Caco-2 (cell line): ENCODE measurements at regions of chr3 and their contacts with region 1.

Region 1: DNA sequence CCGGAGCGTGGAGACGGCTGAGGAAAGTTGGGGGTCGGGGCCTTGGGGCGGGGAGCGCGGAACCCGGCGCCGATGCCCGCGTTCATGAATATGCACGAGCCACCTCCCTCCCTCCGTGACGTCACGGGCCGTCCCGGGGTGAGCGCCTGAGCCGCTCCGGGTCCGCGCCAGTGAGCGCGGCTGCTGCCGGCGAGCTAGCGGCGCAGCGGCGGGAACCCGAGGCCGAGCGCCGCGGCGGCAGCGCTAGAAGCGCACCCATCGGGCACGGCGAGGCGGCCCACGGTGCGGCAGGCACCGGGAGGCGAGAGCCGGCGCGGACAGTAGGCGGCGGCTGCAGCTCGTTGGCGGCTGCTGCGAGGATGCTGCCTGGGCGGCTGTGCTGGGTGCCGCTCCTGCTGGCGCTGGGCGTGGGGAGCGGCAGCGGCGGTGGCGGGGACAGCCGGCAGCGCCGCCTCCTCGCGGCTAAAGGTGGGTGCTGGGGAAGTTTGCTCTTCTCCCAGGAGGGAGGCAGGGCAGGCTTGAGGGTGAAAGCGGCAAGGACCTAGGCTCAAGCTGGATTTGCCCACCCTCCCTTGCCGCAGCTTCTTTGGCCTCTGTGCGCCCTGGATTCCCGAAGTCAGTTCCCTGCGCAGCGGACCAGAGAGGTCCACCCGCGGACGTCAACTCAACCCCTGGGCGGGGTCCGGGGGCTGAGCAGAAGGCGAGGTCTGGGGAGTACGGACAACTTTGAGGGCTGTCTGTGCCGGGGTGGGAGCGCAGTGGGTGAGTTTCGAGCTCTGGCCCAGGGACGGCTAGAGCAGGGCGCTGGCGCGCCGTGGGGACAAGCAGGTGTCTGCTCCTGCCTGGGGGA is at the start of gene CLSTN2:
- DNase-seq: peak; percentile 64 to 81
- H3K4me3 ChIP-seq: peak within 1 kb of the TSS; percentile 55
- H3K4me3 Mint-ChIP-seq: peak within 1 kb of the TSS; percentile 86
- H3K27ac Mint-ChIP-seq: peak within 1 kb of the TSS; percentile 21
- H3K4me1 ChIP-seq: no peaks in the 10 kb centered on the region
- H3K4me1 Mint-ChIP-seq: peaks cover 8% of the 10 kb centered on the region
- H3K27me3 ChIP-seq: no peaks in the 10 kb centered on the region
- H3K27me3 Mint-ChIP-seq: peaks cover 9% of the 10 kb centered on the region
- CTCF ChIP-seq: no peak
- total RNA-seq, gene CLSTN2: 20.1 and 26.1 TPM in 2 replicates

Region 2: DNA sequence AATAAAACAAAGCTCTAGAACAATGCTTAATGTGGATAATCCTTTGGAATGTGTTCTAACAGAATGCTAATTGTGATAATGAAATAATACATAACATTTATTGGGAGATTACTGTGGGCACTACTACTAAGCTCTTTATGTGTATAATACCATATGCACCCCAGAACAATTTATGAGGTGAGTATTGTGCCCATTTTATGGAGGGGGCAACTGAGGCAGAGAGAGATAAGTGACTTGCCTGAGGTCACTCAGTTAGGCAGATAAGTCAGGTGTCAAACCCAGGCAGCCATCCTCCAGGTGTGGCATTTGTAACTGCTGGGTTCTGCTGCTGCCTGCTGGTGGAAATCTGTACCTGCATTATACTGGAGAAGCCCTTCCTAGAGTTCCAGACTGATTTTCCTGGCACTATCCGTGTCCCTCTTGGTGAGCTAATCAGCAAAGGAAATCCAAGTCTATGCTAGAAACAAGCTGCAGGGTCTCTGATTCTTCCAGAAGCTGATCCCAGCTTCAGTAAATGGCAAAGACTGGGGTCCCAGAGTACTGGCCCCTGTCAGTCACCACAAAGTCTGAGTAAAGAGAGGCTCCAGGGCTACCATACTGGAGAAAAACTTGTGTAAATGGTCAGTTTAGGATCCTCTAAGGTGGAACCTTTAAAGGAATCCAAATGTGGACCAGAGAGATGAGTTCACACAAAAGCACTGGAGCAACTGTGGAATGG is 373.1 kb before region 1 on chr3:
- CTCF ChIA-PET with region 1: interaction called, 3 read pairs
- POLR2A ChIA-PET with region 1: no interaction called
- intact Hi-C with region 1: loop called (anchors 1 kb)
- DNase-seq: peak; percentile 66 to 67
- H3K4me3 ChIP-seq: no peak overlapping the region
- H3K4me3 Mint-ChIP-seq: no peak overlapping the region
- H3K27ac Mint-ChIP-seq: no peak overlapping the region
- H3K4me1 ChIP-seq: peaks cover 15% of the 10 kb centered on the region; the same call in 1 of the 2 replicates
- H3K4me1 Mint-ChIP-seq: peaks cover 26% of the 10 kb centered on the region
- H3K27me3 ChIP-seq: no peaks in the 10 kb centered on the region
- H3K27me3 Mint-ChIP-seq: no peaks in the 10 kb centered on the region
- CTCF ChIP-seq: peak; percentile 64 to 77

Region 3: DNA sequence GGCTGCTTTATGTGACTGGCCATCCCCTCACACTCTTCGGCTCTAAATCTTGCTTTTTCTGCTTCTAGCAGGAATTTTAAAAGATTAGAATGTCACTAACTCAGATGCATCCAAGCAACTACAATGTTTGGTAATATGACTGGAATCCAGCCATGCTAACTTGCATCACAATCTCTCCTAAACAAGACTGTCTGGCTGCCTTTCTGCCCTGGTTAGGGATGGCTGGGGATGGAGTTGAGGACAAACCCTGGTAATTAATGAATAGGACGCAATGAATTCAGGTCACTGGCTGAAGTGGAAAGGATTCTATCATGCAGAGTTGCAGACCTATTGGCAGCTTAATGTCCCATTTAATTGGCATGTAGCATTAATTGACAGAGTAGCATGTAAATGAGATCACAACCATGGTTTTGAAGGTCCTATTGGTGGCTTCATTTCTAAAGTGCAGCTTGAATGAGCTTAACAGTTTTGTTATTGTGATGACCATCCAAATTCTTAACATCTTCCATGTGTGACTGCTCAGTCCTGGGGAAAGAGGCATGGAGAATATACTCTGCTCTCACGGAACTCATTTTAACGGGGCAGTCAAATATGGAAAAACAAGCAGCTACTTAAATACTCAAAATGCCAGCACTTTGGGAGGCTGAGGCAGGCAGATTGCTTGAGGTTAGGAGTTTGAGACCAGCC is 279.2 kb before region 1 on chr3:
- CTCF ChIA-PET with region 1: no interaction called
- POLR2A ChIA-PET with region 1: no interaction called
- intact Hi-C with region 1: loop called (anchors 10 kb)
- DNase-seq: no peak
- H3K4me3 ChIP-seq: no peak overlapping the region
- H3K4me3 Mint-ChIP-seq: peak overlapping the region; percentile 58
- H3K27ac Mint-ChIP-seq: peak overlapping the region; percentile 55
- H3K4me1 ChIP-seq: peaks cover 92% of the 10 kb centered on the region
- H3K4me1 Mint-ChIP-seq: peaks cover 27% of the 10 kb centered on the region
- H3K27me3 ChIP-seq: no peaks in the 10 kb centered on the region
- H3K27me3 Mint-ChIP-seq: no peaks in the 10 kb centered on the region
- CTCF ChIP-seq: no peak

Region 4: DNA sequence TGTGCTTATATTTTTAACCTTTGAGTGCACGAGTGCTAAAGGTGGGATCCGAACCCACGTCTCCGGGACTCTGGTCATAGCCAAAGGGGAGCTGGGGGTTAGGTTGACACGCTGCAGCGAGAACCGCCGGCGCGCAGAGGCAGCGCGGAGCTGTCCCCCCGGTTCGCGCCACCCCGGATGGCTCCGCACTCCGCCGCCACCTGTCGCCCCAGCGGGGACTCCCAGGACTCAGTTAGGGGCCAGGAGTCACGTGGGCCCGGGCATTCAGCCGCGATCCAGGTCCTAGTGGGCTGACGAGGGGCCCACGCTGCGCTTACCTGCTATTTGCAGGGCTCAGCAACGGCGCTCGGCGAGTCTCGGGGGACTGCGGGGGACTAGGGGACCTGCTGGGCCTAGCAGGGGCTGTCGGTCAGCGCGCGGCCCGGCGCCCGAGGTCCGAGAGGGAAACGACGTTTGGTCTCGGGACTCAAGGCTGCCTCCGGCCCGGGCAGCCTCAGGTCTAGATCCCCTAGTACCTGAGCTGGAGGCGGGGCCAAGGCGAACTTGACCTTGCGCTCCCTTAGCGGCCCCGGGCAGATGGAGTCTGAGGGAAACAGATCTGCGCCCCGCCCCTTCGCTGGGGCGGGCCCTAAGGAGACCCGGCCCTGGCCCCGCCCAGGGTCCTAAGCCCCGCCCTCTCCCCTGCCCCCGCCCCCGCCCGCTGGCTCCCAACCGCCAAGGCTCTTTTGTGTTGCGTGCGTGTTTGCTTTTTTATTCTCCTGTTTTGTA is 257.7 kb before region 1 on chr3 and contains the start of gene NMNAT3:
- CTCF ChIA-PET with region 1: no interaction called
- POLR2A ChIA-PET with region 1: no interaction called
- intact Hi-C with region 1: no loop called
- DNase-seq: peak; percentile 85 to 87
- H3K4me3 ChIP-seq: peak within 1 kb of the TSS; percentile 65
- H3K4me3 Mint-ChIP-seq: peak within 1 kb of the TSS; percentile 82
- H3K27ac Mint-ChIP-seq: peak within 1 kb of the TSS; percentile 66
- H3K4me1 ChIP-seq: 0 out of 2 replicates have a peak, but pooled peaks cover 7% of the 10 kb centered on the region
- H3K4me1 Mint-ChIP-seq: peaks cover 7% of the 10 kb centered on the region
- H3K27me3 ChIP-seq: no peaks in the 10 kb centered on the region
- H3K27me3 Mint-ChIP-seq: no peaks in the 10 kb centered on the region
- CTCF ChIP-seq: peak in 1 of 2 experiments; percentile 31
- total RNA-seq, gene NMNAT3: 17.5 and 17.6 TPM in 2 replicates

Region 5: DNA sequence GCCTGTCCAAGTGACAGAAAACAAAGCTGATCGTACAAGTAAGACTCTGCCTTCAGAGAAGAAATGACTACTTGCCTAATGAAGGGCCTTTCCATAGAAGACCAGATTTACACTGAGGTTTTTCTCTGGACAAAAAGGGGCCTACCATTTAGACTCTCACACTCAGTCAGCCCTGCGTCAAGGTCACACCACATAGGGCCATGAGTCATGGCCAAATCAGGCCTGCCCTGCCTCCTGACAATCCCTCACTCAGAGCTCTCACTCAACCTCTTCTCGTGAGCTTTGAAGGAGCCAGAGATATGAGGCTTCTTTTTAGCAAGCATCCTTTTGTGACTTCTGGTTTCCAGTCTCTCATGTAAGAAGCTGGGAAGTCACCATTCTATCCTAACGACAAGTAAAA is 189.4 kb before region 1 on chr3:
- CTCF ChIA-PET with region 1: no interaction called
- POLR2A ChIA-PET with region 1: no interaction called
- intact Hi-C with region 1: loop called (anchors 1 kb)
- DNase-seq: no peak
- H3K4me3 ChIP-seq: no peak overlapping the region
- H3K4me3 Mint-ChIP-seq: no peak overlapping the region
- H3K27ac Mint-ChIP-seq: no peak overlapping the region
- H3K4me1 ChIP-seq: peaks cover 18% of the 10 kb centered on the region
- H3K4me1 Mint-ChIP-seq: peaks cover 7% of the 10 kb centered on the region
- H3K27me3 ChIP-seq: no peaks in the 10 kb centered on the region
- H3K27me3 Mint-ChIP-seq: no peaks in the 10 kb centered on the region
- CTCF ChIP-seq: no peak

Region 6: DNA sequence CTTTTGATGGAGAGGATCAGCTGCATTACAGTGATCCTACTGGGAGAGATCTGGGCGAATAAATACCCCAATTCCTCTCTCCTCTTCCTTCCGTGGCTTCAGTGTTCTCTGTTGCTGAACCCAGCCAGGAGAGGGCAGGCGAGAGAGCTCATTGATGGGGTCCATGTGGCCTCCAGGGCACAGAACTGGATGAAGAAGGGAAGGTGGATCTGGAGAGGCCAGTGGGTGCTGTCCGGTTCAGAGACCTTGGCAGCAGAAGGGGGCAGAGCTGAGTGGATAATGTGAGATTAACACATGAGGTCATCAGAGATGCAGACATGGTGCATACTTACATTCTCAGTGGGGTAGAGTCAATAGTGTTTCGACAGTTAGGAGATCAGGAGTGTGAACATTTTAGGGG is 193.4 kb after region 1 on chr3:
- CTCF ChIA-PET with region 1: no interaction called
- POLR2A ChIA-PET with region 1: no interaction called
- intact Hi-C with region 1: loop called (anchors 5 kb)
- DNase-seq: peak; percentile 47 to 53
- H3K4me3 ChIP-seq: no peak overlapping the region
- H3K4me3 Mint-ChIP-seq: no peak overlapping the region
- H3K27ac Mint-ChIP-seq: no peak overlapping the region
- H3K4me1 ChIP-seq: no peaks in the 10 kb centered on the region
- H3K4me1 Mint-ChIP-seq: no peaks in the 10 kb centered on the region
- H3K27me3 ChIP-seq: no peaks in the 10 kb centered on the region; the same call in 1 of the 2 replicates
- H3K27me3 Mint-ChIP-seq: peaks cover 8% of the 10 kb centered on the region
- CTCF ChIP-seq: peak; percentile 57 to 77

Region 7: DNA sequence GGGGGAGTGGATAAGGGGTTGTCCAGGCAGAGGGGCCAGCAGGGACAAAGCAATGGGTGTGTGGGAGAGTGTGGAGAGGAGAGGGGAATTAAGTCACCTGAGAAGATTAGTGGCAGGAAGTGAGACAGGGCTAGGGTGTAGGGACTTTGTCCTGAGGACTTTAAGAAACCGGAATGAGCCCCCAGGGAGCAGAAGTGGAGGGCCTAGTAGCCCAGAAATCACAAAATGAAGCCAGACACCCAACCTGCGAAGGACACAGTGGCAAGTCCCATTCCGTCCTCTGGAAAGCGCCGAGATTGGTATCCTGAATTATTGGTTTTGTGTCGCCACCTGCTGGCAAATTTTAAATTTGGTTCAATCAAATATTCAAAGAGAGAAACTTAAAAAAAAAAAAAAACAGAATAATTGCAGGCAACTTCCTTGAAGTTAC is 928.4 kb after region 1 on chr3:
- CTCF ChIA-PET with region 1: no interaction called
- POLR2A ChIA-PET with region 1: no interaction called
- intact Hi-C with region 1: loop called (anchors 2 kb)
- DNase-seq: peak; percentile 46 to 73
- H3K4me3 ChIP-seq: no peak overlapping the region
- H3K4me3 Mint-ChIP-seq: no peak overlapping the region
- H3K27ac Mint-ChIP-seq: no peak overlapping the region
- H3K4me1 ChIP-seq: no peaks in the 10 kb centered on the region
- H3K4me1 Mint-ChIP-seq: peaks cover 8% of the 10 kb centered on the region
- H3K27me3 ChIP-seq: no peaks in the 10 kb centered on the region
- H3K27me3 Mint-ChIP-seq: peaks cover 8% of the 10 kb centered on the region
- CTCF ChIP-seq: peak; percentile 33 to 50